ENCODE measurements at regions of chr1 and their contacts with region 1.

Region 1: GRCh38 chr1:207499573-207499972 is 3.6 kb downstream of the CR1 start:
- DNase-seq: peak; percentile 46
- H3K4me3 Mint-ChIP-seq: no peak overlapping the region
- H3K27ac Mint-ChIP-seq: no peak overlapping the region
- H3K4me1 Mint-ChIP-seq: peaks cover 12% of the 10 kb centered on the region
- H3K27me3 Mint-ChIP-seq: peaks cover 42% of the 10 kb centered on the region

Region 2: GRCh38 chr1:206803221-206803730 is 696.3 kb before region 1 on chr1:
- intact Hi-C with region 1: loop called (anchors 2 kb)
- DNase-seq: peak; percentile 81
- H3K4me3 Mint-ChIP-seq: peak overlapping the region; percentile 20
- H3K27ac Mint-ChIP-seq: peak overlapping the region; percentile 83
- H3K4me1 Mint-ChIP-seq: peaks cover 87% of the 10 kb centered on the region
- H3K27me3 Mint-ChIP-seq: peaks cover 30% of the 10 kb centered on the region

Region 3: DNA sequence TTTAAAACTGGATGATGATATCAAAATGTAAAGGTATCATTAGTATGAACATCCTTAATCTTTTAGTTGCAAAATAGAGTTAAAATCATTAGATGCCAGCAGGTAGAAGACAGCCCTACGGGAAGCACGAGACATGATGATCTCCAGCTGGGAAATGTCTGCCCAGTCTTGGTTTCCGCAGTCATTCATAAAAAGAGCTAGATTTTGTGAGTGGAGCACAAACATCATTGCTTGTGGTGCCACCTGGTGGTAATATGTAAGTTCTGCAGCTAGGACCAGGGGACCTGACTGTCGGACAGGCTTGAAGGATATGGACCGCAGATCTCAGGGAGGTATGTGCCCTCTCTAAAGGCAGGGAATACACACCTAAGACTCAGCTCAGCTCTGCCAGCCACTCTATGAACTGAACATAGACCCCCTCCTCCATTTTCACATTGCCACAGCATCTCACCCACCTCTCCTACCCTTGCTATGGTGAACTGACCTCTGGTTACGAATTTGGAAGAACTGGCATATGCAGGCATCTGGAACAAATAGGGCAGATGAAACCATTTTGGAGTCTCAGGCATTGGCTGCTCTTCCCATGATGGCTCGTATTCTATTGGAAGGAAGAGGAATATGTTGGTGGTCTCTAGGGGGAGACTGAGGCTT is 587.0 kb before region 1 on chr1:
- intact Hi-C with region 1: loop called (anchors 5 kb)
- DNase-seq: peak; percentile 49
- H3K4me3 Mint-ChIP-seq: no peak overlapping the region
- H3K27ac Mint-ChIP-seq: no peak overlapping the region
- H3K4me1 Mint-ChIP-seq: peaks cover 68% of the 10 kb centered on the region
- H3K27me3 Mint-ChIP-seq: peaks cover 3% of the 10 kb centered on the region

Region 4: DNA sequence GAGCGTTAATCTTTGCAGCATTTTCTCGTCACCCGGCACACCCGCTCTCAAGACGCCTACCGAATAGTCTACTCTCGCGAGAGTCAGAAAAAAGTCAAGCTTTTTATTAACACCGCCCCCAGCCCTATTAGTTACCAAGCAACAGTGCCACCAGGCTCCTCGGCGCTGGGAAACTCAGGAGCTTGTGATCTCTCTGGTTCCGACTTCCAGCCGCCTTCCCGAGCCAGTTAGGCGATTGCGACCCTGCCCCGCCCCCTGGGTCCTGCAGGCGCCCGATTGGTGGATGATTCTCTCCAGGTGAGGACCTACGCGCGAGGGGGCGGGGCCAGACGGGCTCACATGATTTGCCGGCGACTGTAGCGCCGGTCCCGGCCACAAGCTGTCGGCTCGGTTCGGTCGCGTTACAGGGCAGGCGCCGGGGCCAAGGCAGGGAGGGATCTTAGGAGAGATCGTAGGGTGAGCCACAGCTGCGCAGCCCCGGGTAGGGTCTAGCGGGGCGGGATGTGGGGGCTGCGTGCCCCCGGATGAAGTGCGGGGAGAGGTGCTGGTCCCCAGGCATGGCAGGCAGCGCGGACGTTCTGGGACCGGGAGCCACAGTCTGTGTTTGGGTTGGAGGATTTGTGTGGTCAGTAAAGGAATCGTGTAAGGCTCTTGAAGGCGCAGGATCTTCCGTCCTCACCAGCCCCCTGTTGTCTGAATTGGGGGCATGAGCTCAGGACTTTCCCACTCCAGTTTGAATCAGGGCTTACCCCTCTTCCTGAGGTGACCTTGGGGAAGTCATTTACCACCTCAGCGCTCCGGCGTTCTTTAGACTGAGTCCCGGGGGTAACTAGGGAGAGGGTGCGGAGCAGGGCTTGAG is 446.4 kb before region 1 on chr1 and contains the start of gene PFKFB2:
- intact Hi-C with region 1: loop called (anchors 1 kb)
- DNase-seq: peak; percentile 90
- H3K4me3 Mint-ChIP-seq: peak within 1 kb of the TSS; percentile 100
- H3K27ac Mint-ChIP-seq: peak within 1 kb of the TSS; percentile 82
- H3K4me1 Mint-ChIP-seq: peaks cover 53% of the 10 kb centered on the region
- H3K27me3 Mint-ChIP-seq: peaks cover 5% of the 10 kb centered on the region
- total RNA-seq, gene PFKFB2: 2.9 and 4.4 TPM in 2 replicates

Region 5: DNA sequence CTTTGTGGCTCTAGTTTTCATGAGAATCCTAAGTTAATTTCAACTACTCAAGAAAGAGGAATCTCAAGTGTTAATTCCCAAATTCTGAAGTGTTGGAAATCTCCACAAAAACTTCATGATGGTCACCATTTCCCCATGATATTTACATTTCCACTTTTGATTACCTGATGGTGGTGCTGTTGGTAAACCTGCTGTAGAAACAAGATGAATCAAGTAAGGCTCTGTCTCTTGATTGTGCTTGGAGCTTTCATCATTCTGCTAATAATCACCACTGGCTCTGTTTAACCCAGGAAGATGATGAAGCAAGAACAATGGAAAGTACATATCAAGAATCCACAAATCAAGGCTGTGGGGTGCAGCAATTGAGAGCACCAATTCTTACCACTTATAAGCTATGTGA is 317.7 kb before region 1 on chr1:
- intact Hi-C with region 1: loop called (anchors 2 kb)
- DNase-seq: no peak
- H3K4me3 Mint-ChIP-seq: no peak overlapping the region
- H3K27ac Mint-ChIP-seq: no peak overlapping the region
- H3K4me1 Mint-ChIP-seq: no peaks in the 10 kb centered on the region
- H3K27me3 Mint-ChIP-seq: peaks cover 13% of the 10 kb centered on the region

Region 6: GRCh38 chr1:207389740-207390464 is 109.7 kb before region 1 on chr1:
- intact Hi-C with region 1: loop called (anchors 1 kb)
- DNase-seq: no peak
- H3K4me3 Mint-ChIP-seq: no peak overlapping the region
- H3K27ac Mint-ChIP-seq: peak overlapping the region; percentile 81
- H3K4me1 Mint-ChIP-seq: peaks cover 7% of the 10 kb centered on the region
- H3K27me3 Mint-ChIP-seq: no peaks in the 10 kb centered on the region

Region 7: GRCh38 chr1:207454046-207454964 is 45.3 kb before region 1 on chr1 and contains the start of gene CR2:
- intact Hi-C with region 1: loop called (anchors 2 kb)
- DNase-seq: no peak
- H3K4me3 Mint-ChIP-seq: peak within 1 kb of the TSS; percentile 42
- H3K27ac Mint-ChIP-seq: no peak within 1 kb of the TSS
- H3K4me1 Mint-ChIP-seq: peaks cover 10% of the 10 kb centered on the region
- H3K27me3 Mint-ChIP-seq: peaks cover 49% of the 10 kb centered on the region
- total RNA-seq, gene CR2: not detected in 2 replicates

Measured in activated T-helper 1 cell treated with anti-CD3 and anti-CD28 coated beads, Interleukin-12 subunit alpha, Interleukin-12 subunit beta, Interleukin-2, Interleukin-4 antibody, amounts not matched to agents 30 ng/mL and 10 ng/mL and 1 ng/mL, durations not matched to agents 14 hours and 24 hours and 36 hours (primary cell).